B cell (primary cell): ENCODE measurements at regions of chr4 and their contacts with region 1.

Region 1: GRCh38 chr4:166735553-166735952 is 498.7 kb downstream of the SPOCK3 start:
- DNase-seq: no peak
- ATAC-seq: no peak
- H3K4me3 ChIP-seq: no peak overlapping the region
- H3K4me3 Mint-ChIP-seq: no peak overlapping the region
- H3K27ac ChIP-seq: no peak overlapping the region
- H3K27ac Mint-ChIP-seq: no peak overlapping the region
- H3K4me1 ChIP-seq: no peaks in the 10 kb centered on the region
- H3K4me1 Mint-ChIP-seq: no peaks in the 10 kb centered on the region
- H3K27me3 ChIP-seq: no peaks in the 10 kb centered on the region
- H3K27me3 Mint-ChIP-seq: no peaks in the 10 kb centered on the region
- CTCF ChIP-seq: no peak

Region 2: DNA sequence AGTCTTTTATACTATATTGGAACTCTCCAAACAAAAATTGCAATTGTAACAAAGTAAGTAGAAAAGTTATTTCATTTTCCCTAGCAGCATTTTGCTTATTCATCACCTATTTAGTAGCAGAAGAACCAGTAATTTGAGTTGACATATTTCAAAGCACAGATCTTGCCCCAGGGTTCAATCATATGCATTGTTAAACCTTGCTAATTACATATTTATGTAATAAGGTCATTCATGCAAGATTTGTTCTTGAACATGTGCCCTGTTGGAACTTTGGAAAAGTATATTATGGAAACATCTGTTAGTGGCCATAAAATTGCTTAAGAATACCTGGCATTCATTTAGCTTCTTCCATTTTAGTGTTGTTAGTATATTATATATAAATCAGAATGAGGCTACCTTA is 670.8 kb before region 1 on chr4:
- CTCF ChIA-PET with region 1: no interaction called
- POLR2A ChIA-PET with region 1: no interaction called
- intact Hi-C with region 1: no loop called
- DNase-seq: no peak
- ATAC-seq: no peak
- H3K4me3 ChIP-seq: no peak overlapping the region
- H3K4me3 Mint-ChIP-seq: no peak overlapping the region
- H3K27ac ChIP-seq: no peak overlapping the region
- H3K27ac Mint-ChIP-seq: no peak overlapping the region
- H3K4me1 ChIP-seq: no peaks in the 10 kb centered on the region
- H3K4me1 Mint-ChIP-seq: no peaks in the 10 kb centered on the region
- H3K27me3 ChIP-seq: no peaks in the 10 kb centered on the region
- H3K27me3 Mint-ChIP-seq: no peaks in the 10 kb centered on the region
- CTCF ChIP-seq: no peak

Region 3: GRCh38 chr4:166777760-166778159 is 42.2 kb after region 1 on chr4:
- CTCF ChIA-PET with region 1: no interaction called
- POLR2A ChIA-PET with region 1: no interaction called
- intact Hi-C with region 1: loop called (anchors 1 kb)
- DNase-seq: no peak
- ATAC-seq: no peak
- H3K4me3 ChIP-seq: no peak overlapping the region
- H3K4me3 Mint-ChIP-seq: no peak overlapping the region
- H3K27ac ChIP-seq: no peak overlapping the region
- H3K27ac Mint-ChIP-seq: no peak overlapping the region
- H3K4me1 ChIP-seq: no peaks in the 10 kb centered on the region
- H3K4me1 Mint-ChIP-seq: no peaks in the 10 kb centered on the region
- H3K27me3 ChIP-seq: no peaks in the 10 kb centered on the region
- H3K27me3 Mint-ChIP-seq: no peaks in the 10 kb centered on the region
- CTCF ChIP-seq: no peak

Region 4: GRCh38 chr4:166957451-166957850 is 221.9 kb after region 1 on chr4:
- CTCF ChIA-PET with region 1: no interaction called
- POLR2A ChIA-PET with region 1: no interaction called
- intact Hi-C with region 1: no loop called
- DNase-seq: no peak
- ATAC-seq: no peak
- H3K4me3 ChIP-seq: no peak overlapping the region
- H3K4me3 Mint-ChIP-seq: no peak overlapping the region
- H3K27ac ChIP-seq: no peak overlapping the region
- H3K27ac Mint-ChIP-seq: no peak overlapping the region
- H3K4me1 ChIP-seq: no peaks in the 10 kb centered on the region
- H3K4me1 Mint-ChIP-seq: no peaks in the 10 kb centered on the region
- H3K27me3 ChIP-seq: no peaks in the 10 kb centered on the region
- H3K27me3 Mint-ChIP-seq: no peaks in the 10 kb centered on the region
- CTCF ChIP-seq: no peak